AG04449 (cell line): ENCODE measurements at regions of chr19 and their contacts with region 1.

Region 1: DNA sequence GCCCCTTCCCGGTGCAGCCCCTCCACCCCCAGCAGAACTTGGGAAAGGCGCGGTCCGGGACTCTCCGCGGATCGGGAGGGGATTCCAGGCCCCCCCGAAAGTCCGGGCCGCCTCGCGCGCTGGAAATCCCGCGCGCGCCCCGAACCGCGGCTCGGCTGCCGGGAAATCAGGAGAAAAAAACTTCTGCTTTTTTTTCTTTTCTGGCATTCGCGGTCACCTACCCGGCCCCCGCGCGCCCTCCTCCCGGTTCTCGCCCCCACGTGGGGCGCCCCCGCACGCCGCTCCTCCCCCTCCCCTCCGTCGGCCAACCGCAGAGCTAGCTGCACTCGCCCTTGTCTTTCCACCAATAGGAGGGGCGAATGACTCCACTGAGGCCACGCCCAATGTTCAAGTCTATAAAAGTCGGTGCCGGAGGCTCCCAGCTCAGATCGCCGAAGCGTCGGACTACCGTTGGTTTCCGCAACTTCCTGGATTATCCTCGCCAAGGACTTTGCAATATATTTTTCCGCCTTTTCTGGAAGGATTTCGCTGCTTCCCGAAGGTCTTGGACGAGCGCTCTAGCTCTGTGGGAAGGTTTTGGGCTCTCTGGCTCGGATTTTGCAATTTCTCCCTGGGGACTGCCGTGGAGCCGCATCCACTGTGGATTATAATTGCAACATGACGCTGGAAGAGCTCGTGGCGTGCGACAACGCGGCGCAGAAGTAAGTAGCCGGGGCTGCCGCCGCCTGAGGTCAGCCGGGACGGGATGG is at the start of gene GADD45B:
- DNase-seq: peak; percentile 82
- H3K4me3 ChIP-seq: peak within 1 kb of the TSS; percentile 100
- CTCF ChIP-seq: no peak

Region 2: DNA sequence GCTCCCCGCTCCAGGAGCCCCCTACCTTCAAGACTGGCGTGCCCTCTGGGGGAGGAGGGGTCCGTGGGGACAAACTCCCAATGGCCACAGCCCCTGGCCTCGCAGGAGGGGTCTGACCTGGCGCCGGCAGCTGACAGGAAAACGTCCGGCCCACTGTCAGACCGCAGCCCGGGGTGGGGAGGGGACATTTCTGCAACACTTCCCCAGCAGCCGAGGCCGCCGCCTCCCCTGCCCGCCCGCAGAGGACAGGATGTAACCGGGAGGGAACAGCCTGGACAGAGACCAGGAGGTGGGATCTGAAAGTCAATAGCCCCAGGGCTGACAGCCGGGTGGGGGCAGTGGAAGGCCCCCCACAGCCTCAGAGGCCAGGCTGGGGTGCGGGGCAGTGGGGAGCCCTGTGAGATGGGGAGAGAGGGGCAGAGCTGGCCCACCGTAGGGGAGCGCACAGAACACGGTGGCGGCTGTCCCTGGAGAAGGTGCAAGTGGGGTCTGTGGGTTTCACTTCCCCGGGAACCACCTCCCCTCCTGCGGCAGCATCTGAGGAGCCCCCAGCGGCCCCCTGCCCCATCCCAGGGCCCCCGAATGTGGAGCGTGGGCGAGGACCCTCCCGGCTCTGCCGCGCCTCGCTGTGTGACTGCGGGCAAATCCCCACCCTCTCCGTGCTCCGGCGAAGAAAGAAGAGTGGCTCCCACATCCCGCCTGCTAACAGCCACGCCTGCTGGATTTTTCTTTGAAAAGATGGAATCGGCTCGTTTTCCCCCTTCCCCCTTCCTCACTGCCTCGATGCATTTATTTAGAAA is 193.6 kb before region 1 on chr19 and contains the start of gene PEAK3:
- CTCF ChIA-PET with region 1: no interaction called
- POLR2A ChIA-PET with region 1: no interaction called
- DNase-seq: no peak
- H3K4me3 ChIP-seq: peak within 1 kb of the TSS; percentile 36
- CTCF ChIP-seq: no peak

Region 3: GRCh38 chr19:2345794-2346663 is 129.8 kb before region 1 on chr19:
- CTCF ChIA-PET with region 1: no interaction called
- POLR2A ChIA-PET with region 1: no interaction called
- DNase-seq: no peak
- H3K4me3 ChIP-seq: no peak overlapping the region
- CTCF ChIP-seq: no peak

Region 4: DNA sequence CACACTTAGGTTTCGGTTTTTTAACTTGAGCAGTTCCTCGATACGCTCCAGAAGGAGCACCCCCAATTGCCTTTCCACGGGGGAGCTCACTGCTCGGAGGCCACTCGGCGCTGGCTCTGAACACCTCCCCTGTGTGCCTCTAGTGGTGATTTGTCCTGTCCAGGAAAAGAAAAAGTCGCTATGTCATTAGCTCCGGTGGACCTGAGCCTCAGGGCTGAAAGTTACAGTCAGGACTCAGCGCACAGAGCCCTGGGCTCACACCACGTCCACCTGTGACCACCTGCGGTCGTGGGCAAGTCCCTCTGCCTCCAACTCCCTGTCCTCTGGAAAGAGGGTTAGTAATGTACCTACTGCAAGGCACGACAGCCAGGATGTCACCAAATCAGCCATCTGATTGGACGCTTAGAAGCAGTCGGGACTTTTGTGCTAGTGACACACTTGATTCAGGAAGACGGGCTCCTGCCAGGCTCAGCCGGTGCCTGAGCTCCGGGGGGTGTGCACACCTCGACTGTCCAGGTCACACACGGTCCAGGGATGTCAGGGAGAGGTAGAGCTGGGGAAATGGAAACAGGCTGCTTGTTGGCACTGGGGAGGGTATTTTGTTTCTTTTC is 119.7 kb before region 1 on chr19:
- CTCF ChIA-PET with region 1: no interaction called
- POLR2A ChIA-PET with region 1: no interaction called
- DNase-seq: no peak
- H3K4me3 ChIP-seq: no peak overlapping the region
- CTCF ChIP-seq: no peak

Region 5: GRCh38 chr19:2427429-2428320 is 48.2 kb before region 1 on chr19 and contains the start of gene TIMM13:
- CTCF ChIA-PET with region 1: interaction called, 3 read pairs
- POLR2A ChIA-PET with region 1: interaction called, 14 read pairs
- DNase-seq: peak; percentile 76
- H3K4me3 ChIP-seq: peak within 1 kb of the TSS; percentile 92
- CTCF ChIP-seq: no peak

Region 6: DNA sequence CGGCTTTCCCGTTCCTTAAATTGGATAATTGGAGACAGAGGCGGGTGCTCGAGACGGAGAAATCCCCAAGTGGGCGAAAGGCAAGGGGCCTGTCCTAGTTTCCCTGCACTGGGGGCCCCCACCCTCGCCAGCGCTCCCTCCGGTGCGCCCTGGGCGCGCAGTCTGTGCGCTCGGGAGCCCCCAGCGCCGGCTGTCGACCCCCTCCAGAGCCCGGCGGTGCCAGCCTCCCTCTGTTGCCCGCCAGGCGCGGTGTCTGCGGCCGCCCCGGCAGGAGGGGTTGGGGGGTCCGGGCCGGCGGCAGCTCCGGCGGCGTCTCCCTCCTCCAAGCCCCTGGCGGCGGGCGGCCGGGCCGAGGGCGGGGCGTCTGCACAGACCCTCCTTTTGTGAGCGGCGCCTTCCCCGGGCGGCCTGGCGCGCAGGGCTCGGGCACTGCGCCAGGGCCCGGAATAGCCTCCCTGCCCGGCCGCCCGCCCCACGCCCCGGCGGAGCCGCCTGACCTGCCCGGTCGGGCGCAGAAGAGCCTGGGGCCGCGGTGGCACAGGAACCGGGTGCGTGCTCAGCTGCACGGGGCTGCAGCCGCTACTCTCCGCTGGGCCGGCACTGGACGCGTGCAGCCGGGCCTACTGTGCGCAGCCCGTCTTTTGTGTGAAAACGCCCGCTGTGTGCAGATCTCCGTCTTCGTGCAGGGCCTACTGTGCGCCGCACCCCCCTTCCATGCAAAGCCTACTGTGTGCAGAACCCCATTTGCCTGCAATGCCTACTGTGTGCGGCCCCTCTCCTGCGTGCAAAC is 13.3 kb after region 1 on chr19:
- CTCF ChIA-PET with region 1: interaction called, 5 read pairs
- POLR2A ChIA-PET with region 1: interaction called, 79 read pairs
- DNase-seq: no peak
- H3K4me3 ChIP-seq: peak overlapping the region; percentile 45
- CTCF ChIP-seq: no peak

Region 7: GRCh38 chr19:2523630-2524311 is 47.9 kb after region 1 on chr19:
- CTCF ChIA-PET with region 1: interaction called, 3 read pairs
- POLR2A ChIA-PET with region 1: interaction called, 34 read pairs
- DNase-seq: peak; percentile 51
- H3K4me3 ChIP-seq: peak overlapping the region; percentile 3; the same call in 1 of the 2 replicates
- CTCF ChIP-seq: peak; percentile 53

Region 8: GRCh38 chr19:2552859-2553258 is 77.0 kb after region 1 on chr19:
- CTCF ChIA-PET with region 1: interaction called, 3 read pairs
- POLR2A ChIA-PET with region 1: interaction called, 20 read pairs
- DNase-seq: no peak
- H3K4me3 ChIP-seq: no peak overlapping the region
- CTCF ChIP-seq: no peak

Region 9: DNA sequence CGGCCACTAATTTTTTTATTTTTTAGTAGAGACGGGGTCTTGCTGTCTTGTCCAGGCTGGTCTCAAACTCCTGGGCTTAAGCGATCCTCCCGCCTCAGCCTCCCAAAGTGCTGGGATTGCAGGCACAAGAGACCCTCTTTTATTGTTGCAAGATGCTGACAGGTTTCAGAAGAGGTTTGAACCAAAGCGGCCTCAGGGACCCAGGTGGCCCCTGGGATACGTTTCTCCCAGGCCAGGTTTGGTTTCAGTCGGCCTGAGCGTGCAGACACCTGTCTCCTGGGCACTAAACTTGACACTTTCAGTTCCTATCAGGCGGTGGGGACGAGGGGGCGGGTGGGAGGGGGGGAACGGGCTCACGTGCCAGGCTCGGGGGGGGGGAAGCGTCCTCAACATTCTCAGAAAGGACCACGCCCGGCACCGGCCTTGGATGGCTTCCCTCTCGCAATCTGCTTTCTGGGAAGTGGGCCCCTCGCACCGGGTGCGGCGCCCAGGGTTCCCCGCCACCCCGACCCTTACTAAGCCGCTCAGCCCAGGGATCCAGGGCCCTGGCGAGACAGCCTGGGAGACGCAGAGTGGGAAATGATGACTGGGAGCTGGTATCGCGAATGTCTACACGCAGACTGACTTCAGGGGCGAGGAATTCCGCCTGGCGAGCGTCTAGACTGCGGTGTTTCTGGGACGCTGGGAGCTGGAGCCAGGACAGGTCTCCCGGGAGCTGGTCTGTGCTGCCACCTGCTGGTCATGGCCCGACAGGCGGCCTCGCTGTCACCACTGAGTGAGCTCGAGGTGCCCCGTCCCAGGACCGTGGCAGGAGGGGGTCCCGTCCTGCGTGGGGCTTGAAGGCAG is 135.0 kb after region 1 on chr19:
- CTCF ChIA-PET with region 1: interaction called, 232 read pairs
- POLR2A ChIA-PET with region 1: interaction called, 191 read pairs
- DNase-seq: peak; percentile 77
- H3K4me3 ChIP-seq: peak overlapping the region; percentile 47
- CTCF ChIP-seq: peak; percentile 96

Region 10: GRCh38 chr19:2636897-2637683 is 161.2 kb after region 1 on chr19:
- CTCF ChIA-PET with region 1: interaction called, 12 read pairs
- POLR2A ChIA-PET with region 1: interaction called, 11 read pairs
- DNase-seq: no peak
- H3K4me3 ChIP-seq: no peak overlapping the region
- CTCF ChIP-seq: peak; percentile 87

Region 11: GRCh38 chr19:2900296-2901252 is 424.7 kb after region 1 on chr19 and contains the start of gene ZNF57:
- CTCF ChIA-PET with region 1: no interaction called
- POLR2A ChIA-PET with region 1: no interaction called
- DNase-seq: peak; percentile 90
- H3K4me3 ChIP-seq: peak within 1 kb of the TSS; percentile 95
- CTCF ChIP-seq: no peak